AG04449 (cell line): ENCODE measurements at regions of chr15 and their contacts with region 1.

Region 1: GRCh38 chr15:98311566-98312188 is 336.7 kb upstream of the IGF1R start:
- DNase-seq: peak; percentile 7
- H3K4me3 ChIP-seq: no peak overlapping the region
- CTCF ChIP-seq: peak; percentile 65

Region 2: GRCh38 chr15:98202256-98202655 is 109.4 kb before region 1 on chr15:
- CTCF ChIA-PET with region 1: no interaction called
- POLR2A ChIA-PET with region 1: no interaction called
- DNase-seq: no peak
- H3K4me3 ChIP-seq: no peak overlapping the region
- CTCF ChIP-seq: no peak

Region 3: DNA sequence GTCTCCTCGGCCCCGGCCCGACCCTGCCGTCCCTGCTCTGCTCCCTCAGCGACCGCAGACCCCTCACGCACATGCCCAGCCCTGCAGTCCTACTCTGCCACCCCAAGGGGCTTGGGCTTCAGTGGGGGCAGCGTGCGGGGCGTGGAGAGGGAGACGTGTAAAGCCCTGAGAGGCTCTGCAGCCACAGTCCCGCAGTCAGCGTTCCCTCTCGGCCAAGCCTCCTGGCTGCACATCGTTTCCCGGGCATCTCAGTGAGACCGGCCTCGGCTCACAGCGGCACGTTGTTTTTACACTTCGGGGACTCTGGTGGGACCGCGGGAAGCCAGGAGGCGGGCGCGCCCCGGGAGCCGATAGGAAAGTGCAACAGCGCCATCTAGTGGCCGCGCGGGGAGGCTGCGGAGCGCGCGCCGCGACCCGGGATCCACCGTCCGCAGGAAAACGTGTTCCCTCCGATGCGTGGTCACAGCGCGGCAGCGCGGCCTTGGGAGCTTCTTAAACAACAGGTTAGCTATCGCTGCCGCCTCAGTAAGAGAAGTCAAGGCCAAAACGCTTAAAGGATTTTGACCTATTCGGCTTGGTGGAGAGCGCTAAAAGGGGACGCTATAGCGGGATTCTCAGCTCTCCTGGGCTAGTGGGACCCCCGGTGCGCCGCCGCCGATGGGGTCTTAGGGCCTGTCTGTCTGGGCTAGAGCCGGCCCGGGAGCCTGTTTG is 109.9 kb after region 1 on chr15:
- CTCF ChIA-PET with region 1: interaction called, 112 read pairs
- POLR2A ChIA-PET with region 1: no interaction called
- DNase-seq: no peak
- H3K4me3 ChIP-seq: peak overlapping the region; percentile 42
- CTCF ChIP-seq: peak; percentile 98

Region 4: DNA sequence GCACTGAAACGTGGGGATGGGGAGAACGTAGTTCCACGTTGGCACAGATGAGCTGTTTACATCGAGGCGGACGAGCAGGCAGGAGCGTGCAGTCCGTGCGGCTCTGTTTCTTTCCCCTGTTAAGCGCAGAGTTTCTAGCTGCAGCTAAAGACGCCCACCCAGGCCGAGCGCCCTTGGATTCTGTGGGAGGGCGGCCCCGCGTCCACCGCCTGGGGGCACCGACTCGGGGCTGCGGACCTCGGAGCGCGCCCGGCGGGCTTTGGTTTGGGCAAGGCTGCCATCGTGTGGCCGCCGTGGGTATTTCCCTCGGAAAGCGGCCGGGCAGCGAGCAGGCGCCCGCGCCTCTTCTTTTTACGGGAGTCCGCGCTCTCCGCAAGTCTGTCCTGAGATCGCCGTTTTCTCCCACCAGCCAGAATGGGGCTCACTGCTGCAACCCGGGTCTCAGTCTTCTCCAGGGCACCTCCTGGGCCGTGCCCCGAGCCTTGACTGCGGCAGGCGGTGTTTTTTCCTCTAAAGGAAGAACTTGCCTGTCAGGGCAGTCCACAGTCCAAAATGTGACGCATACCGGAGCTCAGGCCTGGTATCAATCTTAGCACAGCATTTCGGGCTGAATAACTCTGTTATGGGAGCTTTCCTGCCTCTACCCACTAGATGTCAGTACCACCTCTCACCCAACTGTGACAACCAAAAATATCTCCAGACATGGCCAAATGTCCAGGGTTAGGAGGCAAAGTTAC is 116.7 kb after region 1 on chr15:
- CTCF ChIA-PET with region 1: interaction called, 112 read pairs
- POLR2A ChIA-PET with region 1: no interaction called
- DNase-seq: no peak
- H3K4me3 ChIP-seq: peak overlapping the region; percentile 56
- CTCF ChIP-seq: peak; percentile 90

Region 5: GRCh38 chr15:98548154-98548971 is 236.7 kb after region 1 on chr15:
- CTCF ChIA-PET with region 1: no interaction called
- POLR2A ChIA-PET with region 1: no interaction called
- DNase-seq: no peak
- H3K4me3 ChIP-seq: peak overlapping the region; percentile 63
- CTCF ChIP-seq: peak; percentile 20